ENCODE measurements at regions of chr6 and their contacts with region 1.

Region 1: GRCh38 chr6:31366693-31367470 is 9.9 kb upstream of the HLA-B start:
- DNase-seq: peak; percentile 78 to 84
- ATAC-seq: peak; percentile 99 to 100
- H3K4me3 ChIP-seq: peak overlapping the region; percentile 40
- H3K27ac ChIP-seq: no peak overlapping the region
- H3K4me1 ChIP-seq: no peaks in the 10 kb centered on the region
- CTCF ChIP-seq: peak; percentile 84
- EP300 ChIP-seq: no peak
- POLR2A ChIP-seq: no peak
- RAD21 ChIP-seq: peak; percentile 86 to 89

Region 2: DNA sequence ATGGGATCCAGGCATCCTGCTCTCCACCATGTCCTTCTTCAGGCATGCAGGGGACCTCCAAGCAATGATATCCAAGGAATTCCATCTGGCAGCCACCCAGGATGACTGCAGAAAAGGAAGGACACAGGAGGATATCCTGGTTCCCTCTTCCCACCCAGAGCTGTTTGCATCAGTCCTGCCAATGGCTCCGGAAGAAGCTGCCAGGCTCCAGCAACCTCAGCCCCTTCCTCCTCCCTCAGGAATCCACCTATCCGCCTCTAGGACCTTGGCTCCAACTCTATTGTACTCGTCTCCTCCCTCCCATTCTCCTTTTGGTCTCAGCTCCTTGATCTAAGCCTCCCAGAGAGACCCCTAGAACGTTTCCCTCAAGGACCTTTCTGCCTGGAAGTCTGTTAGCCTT is 227.3 kb before region 1 on chr6:
- CTCF ChIA-PET with region 1: interaction called, 30 read pairs
- POLR2A ChIA-PET with region 1: no interaction called
- DNase-seq: peak in 1 of 2 experiments; percentile 22
- ATAC-seq: peak in 1 of 2 experiments; percentile 33; a peak in 3 of 6 replicates
- H3K4me3 ChIP-seq: no peak overlapping the region
- H3K27ac ChIP-seq: 0 out of 6 replicates have a peak overlapping the region, but pooled peaks of 1 of the 2 experiments have one; percentile 16
- H3K4me1 ChIP-seq: peaks cover 10% of the 10 kb centered on the region; the same call in 2 of the 3 replicates
- CTCF ChIP-seq: no peak
- EP300 ChIP-seq: no peak
- POLR2A ChIP-seq: no peak
- RAD21 ChIP-seq: no peak

Region 3: DNA sequence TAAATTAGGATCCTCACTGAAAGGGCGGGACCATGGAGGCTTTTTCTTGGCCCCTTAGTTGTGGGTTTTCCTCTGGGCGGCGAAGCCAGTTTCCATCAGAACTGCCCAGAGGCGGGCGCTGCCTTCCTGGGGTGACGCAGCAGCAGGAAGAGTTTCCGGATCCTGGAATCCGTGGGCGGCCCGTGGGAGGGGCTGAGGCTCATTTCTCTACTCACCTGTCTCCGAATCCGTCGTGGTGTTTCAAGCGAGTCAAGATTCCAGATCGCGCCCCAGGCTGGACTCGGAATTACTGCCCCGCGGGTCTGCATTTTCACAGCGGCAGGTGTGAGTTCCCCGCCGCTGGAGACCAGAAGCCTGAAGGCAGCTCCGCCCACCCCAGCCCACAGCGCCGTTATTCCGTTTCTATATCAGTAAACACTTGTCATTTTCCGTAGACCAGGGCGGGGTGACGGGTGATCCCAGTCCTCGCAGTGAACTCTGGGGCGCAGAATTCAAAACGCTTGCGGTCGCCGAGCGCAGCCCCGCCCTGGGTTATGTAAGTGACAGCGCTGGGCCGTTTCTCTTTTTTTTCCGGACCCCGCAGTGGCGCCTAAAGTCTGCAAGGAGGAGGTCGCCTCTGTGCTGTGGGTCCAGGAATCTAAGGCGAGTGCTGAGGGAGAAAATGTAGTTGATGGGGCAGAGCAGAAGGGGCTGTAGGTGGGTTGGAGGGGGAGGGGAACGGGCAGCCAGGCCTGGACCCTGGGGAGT is 169.2 kb before region 1 on chr6:
- CTCF ChIA-PET with region 1: interaction called, 72 read pairs
- POLR2A ChIA-PET with region 1: interaction called, 5 read pairs
- DNase-seq: peak; percentile 40 to 83
- ATAC-seq: peak; percentile 89 to 94
- H3K4me3 ChIP-seq: peak overlapping the region; percentile 68
- H3K27ac ChIP-seq: peak overlapping the region; percentile 84 to 96
- H3K4me1 ChIP-seq: peaks cover 3% of the 10 kb centered on the region
- CTCF ChIP-seq: no peak
- EP300 ChIP-seq: no peak
- POLR2A ChIP-seq: peak; percentile 30; the same call in 1 of the 2 replicates
- RAD21 ChIP-seq: no peak

Region 4: GRCh38 chr6:31308050-31308844 is 58.6 kb before region 1 on chr6:
- CTCF ChIA-PET with region 1: interaction called, 14 read pairs
- POLR2A ChIA-PET with region 1: no interaction called
- DNase-seq: peak in 1 of 2 experiments; percentile 10
- ATAC-seq: peak in 1 of 2 experiments; percentile 42; a peak in 3 of 6 replicates
- H3K4me3 ChIP-seq: 0 out of 3 replicates have a peak overlapping the region, but pooled peaks have one; percentile 17
- H3K27ac ChIP-seq: no peak overlapping the region
- H3K4me1 ChIP-seq: no peaks in the 10 kb centered on the region
- CTCF ChIP-seq: no peak
- EP300 ChIP-seq: no peak
- POLR2A ChIP-seq: no peak
- RAD21 ChIP-seq: no peak

Region 5: DNA sequence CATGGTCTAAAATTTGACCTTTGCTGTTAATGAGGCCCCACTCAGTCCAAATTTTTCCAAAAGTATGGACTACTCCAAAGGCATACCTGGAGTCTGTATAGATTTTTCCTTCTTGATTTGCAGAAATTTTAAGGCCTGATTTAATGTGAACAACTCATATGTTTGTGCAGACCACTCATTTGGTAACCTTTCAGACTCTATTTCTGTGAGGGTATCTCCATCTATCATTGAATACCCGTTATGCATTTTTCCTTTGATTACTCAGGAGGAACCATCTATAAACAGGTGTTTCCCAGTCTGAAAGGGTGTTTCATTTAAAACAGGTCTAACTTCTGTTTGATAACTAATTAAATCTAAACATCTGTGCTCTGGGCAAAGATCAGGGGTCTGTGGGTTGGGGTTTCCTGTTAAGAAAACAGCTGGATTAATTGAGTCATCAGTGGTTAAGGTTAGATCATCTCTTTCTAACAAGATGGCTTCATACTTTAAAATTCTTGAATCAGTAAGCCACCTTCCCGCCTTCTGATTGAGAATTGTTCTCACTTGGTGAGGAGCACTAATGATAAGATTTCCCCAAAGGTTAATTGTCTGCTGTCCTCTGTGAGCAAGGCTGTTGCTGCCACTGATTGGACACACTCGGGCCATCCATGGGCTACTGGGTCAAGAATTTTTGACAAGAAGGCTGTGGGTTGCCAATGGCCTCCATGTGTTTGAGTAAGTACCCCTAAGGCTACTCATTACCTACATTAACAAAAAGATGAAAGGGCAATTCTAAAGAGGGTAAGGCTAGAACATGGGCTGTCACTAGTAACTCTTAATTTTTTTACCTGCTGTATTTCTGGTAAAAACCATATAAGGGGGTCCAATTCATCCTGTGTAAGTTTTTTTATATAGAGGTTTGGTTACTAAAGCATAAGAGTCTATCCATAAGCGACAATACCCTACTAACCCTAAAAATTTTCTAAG is 34.0 kb before region 1 on chr6:
- CTCF ChIA-PET with region 1: no interaction called
- POLR2A ChIA-PET with region 1: no interaction called
- DNase-seq: no peak
- ATAC-seq: no peak
- H3K4me3 ChIP-seq: no peak overlapping the region
- H3K27ac ChIP-seq: no peak overlapping the region
- H3K4me1 ChIP-seq: no peaks in the 10 kb centered on the region
- CTCF ChIP-seq: no peak
- EP300 ChIP-seq: no peak
- POLR2A ChIP-seq: no peak
- RAD21 ChIP-seq: no peak

Region 6: GRCh38 chr6:31378062-31378720 is 11.3 kb after region 1 on chr6:
- CTCF ChIA-PET with region 1: interaction called, 47 read pairs
- POLR2A ChIA-PET with region 1: no interaction called
- DNase-seq: no peak
- ATAC-seq: peak in 1 of 2 experiments; percentile 40; a peak in 2 of 6 replicates
- H3K4me3 ChIP-seq: no peak overlapping the region
- H3K27ac ChIP-seq: no peak overlapping the region
- H3K4me1 ChIP-seq: 0 out of 3 replicates have a peak, but pooled peaks cover 3% of the 10 kb centered on the region
- CTCF ChIP-seq: no peak
- EP300 ChIP-seq: no peak
- POLR2A ChIP-seq: no peak
- RAD21 ChIP-seq: no peak

Region 7: GRCh38 chr6:31479933-31480535 is 113.2 kb after region 1 on chr6:
- CTCF ChIA-PET with region 1: no interaction called
- POLR2A ChIA-PET with region 1: no interaction called
- DNase-seq: no peak
- ATAC-seq: no peak
- H3K4me3 ChIP-seq: no peak overlapping the region
- H3K27ac ChIP-seq: no peak overlapping the region
- H3K4me1 ChIP-seq: no peaks in the 10 kb centered on the region
- CTCF ChIP-seq: no peak
- EP300 ChIP-seq: no peak
- POLR2A ChIP-seq: no peak
- RAD21 ChIP-seq: no peak

Region 8: GRCh38 chr6:31493875-31494694 is 127.2 kb after region 1 on chr6:
- CTCF ChIA-PET with region 1: no interaction called
- POLR2A ChIA-PET with region 1: no interaction called
- DNase-seq: peak; percentile 67 to 70
- ATAC-seq: peak; percentile 74 to 84
- H3K4me3 ChIP-seq: peak overlapping the region; percentile 56
- H3K27ac ChIP-seq: peak overlapping the region; percentile 72 to 90
- H3K4me1 ChIP-seq: peaks cover 10% of the 10 kb centered on the region; the same call in 2 of the 3 replicates
- CTCF ChIP-seq: peak; percentile 65
- EP300 ChIP-seq: no peak
- POLR2A ChIP-seq: no peak
- RAD21 ChIP-seq: peak; percentile 61 to 65